Natural killer cell (primary cell): ENCODE measurements at regions of chr4 and their contacts with region 1.

Region 1: GRCh38 chr4:89294573-89295269 is 12.9 kb downstream of the GPRIN3 start:
- DNase-seq: peak in 1 of 2 donors; percentile 83
- ATAC-seq: peak; percentile 68 to 85 (median 82)
- H3K4me3 ChIP-seq: no peak overlapping the region
- H3K4me3 Mint-ChIP-seq: peak overlapping the region; percentile 87
- H3K27ac ChIP-seq: peak overlapping the region; percentile 88
- H3K27ac Mint-ChIP-seq: peak overlapping the region in 1 of 2 donors; percentile 96
- H3K4me1 ChIP-seq: peaks cover 47% of the 10 kb centered on the region
- H3K4me1 Mint-ChIP-seq: peaks cover 88 to 89% of the 10 kb centered on the region in 2 donors
- H3K27me3 ChIP-seq: no peaks in the 10 kb centered on the region
- H3K27me3 Mint-ChIP-seq: no peaks in the 10 kb centered on the region
- CTCF ChIP-seq: no peak

Region 2: GRCh38 chr4:88284439-88285234 is 1010.1 kb before region 1 on chr4 and contains the start of gene PPM1K:
- intact Hi-C with region 1: loop called (anchors 10 kb)
- DNase-seq: peak; percentile 99
- ATAC-seq: peak; percentile 80 to 95 (median 86)
- H3K4me3 ChIP-seq: peak within 1 kb of the TSS; percentile 85
- H3K4me3 Mint-ChIP-seq: peak within 1 kb of the TSS; percentile 99
- H3K27ac ChIP-seq: peak within 1 kb of the TSS; percentile 96
- H3K27ac Mint-ChIP-seq: peak within 1 kb of the TSS; percentile 92 to 100
- H3K4me1 ChIP-seq: peaks cover 26% of the 10 kb centered on the region
- H3K4me1 Mint-ChIP-seq: peaks cover 46 to 52% of the 10 kb centered on the region in 2 donors
- H3K27me3 ChIP-seq: no peaks in the 10 kb centered on the region
- H3K27me3 Mint-ChIP-seq: no peaks in the 10 kb centered on the region
- CTCF ChIP-seq: no peak
- total RNA-seq, gene PPM1K: 68.0 to 76.8 (median 74.3) TPM

Region 3: DNA sequence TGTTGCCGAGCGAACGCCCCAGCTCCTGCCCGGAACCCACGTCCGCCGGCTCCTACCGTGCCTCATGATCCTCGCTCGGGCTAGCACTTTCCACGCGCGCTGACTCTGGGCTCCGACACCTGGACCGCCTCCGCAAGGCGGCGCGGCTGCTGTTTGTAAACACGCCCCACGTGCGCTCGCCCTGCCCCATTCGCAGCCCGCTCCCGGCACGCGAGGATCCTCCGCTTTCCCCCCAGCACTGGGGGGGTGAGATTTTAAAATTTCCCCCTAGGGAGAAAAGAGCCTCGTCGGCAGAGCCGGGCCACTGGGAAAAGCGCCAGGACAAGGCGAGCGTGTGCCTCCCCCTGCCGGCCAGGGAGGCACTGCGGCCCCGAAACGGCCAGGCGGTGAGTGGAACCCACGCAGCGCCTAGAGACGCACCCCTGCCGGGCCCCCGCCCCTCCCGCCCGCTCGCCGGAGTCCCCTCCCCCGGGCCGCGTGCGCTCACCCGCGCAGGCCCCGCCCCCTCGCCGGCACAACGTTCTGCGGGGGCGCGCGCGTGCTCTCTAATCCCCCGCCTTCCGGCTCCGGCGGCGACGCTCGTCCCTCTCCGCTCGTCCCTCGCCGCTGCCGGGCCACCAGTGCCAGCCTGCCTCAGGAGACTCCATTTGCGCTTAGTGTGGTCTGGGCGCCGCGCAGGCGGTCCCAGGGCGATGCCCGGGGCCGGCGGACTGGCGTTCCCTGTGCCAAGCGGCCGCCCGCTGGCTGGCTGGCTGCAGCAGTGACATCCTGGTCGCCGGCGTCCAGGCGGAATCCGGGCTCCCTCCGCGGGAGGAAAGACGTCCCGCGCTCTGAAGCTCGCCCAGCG is 183.5 kb before region 1 on chr4 and contains the start of gene TIGD2:
- intact Hi-C with region 1: loop called (anchors 10 kb)
- DNase-seq: peak; percentile 86 to 95
- ATAC-seq: peak; percentile 92 to 98 (median 92)
- H3K4me3 ChIP-seq: peak within 1 kb of the TSS; percentile 62
- H3K4me3 Mint-ChIP-seq: peak within 1 kb of the TSS; percentile 96
- H3K27ac ChIP-seq: peak within 1 kb of the TSS; percentile 68
- H3K27ac Mint-ChIP-seq: peak within 1 kb of the TSS; percentile 89 to 90
- H3K4me1 ChIP-seq: peaks cover 14% of the 10 kb centered on the region
- H3K4me1 Mint-ChIP-seq: peaks cover 27 to 32% of the 10 kb centered on the region in 2 donors
- H3K27me3 ChIP-seq: no peaks in the 10 kb centered on the region
- H3K27me3 Mint-ChIP-seq: peaks cover 11 to 18% of the 10 kb centered on the region in 2 donors
- CTCF ChIP-seq: peak; percentile 94
- total RNA-seq, gene TIGD2: 3.2 to 7.6 (median 5.1) TPM

Region 4: DNA sequence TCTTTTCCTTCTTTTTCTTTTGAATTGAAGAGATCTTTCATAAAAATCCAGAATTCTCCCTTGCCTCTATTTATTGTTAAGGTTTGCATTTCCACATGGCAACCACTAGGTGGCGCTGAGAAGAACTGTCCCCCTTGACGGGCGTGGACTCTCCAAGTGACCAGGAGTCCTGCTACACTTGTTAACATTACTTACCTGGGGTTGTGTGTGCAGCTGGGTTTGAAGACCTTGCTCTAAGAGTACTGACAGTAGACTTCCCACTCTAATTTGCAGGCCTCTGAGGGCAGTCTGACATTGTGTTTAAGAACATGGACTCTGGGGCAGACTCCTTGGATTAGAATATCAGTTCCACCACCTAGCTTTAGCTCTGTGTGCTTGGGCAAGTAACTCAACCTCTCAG is 39.9 kb before region 1 on chr4:
- intact Hi-C with region 1: loop called (anchors 2 kb)
- DNase-seq: peak; percentile 48 to 83
- ATAC-seq: peak; percentile 79 to 86 (median 81)
- H3K4me3 ChIP-seq: no peak overlapping the region
- H3K4me3 Mint-ChIP-seq: peak overlapping the region; percentile 49
- H3K27ac ChIP-seq: peak overlapping the region; percentile 49
- H3K27ac Mint-ChIP-seq: peak overlapping the region; percentile 74 to 77
- H3K4me1 ChIP-seq: peaks cover 27% of the 10 kb centered on the region
- H3K4me1 Mint-ChIP-seq: peaks cover 53 to 67% of the 10 kb centered on the region in 2 donors
- H3K27me3 ChIP-seq: no peaks in the 10 kb centered on the region
- H3K27me3 Mint-ChIP-seq: no peaks in the 10 kb centered on the region
- CTCF ChIP-seq: peak; percentile 90

Region 5: DNA sequence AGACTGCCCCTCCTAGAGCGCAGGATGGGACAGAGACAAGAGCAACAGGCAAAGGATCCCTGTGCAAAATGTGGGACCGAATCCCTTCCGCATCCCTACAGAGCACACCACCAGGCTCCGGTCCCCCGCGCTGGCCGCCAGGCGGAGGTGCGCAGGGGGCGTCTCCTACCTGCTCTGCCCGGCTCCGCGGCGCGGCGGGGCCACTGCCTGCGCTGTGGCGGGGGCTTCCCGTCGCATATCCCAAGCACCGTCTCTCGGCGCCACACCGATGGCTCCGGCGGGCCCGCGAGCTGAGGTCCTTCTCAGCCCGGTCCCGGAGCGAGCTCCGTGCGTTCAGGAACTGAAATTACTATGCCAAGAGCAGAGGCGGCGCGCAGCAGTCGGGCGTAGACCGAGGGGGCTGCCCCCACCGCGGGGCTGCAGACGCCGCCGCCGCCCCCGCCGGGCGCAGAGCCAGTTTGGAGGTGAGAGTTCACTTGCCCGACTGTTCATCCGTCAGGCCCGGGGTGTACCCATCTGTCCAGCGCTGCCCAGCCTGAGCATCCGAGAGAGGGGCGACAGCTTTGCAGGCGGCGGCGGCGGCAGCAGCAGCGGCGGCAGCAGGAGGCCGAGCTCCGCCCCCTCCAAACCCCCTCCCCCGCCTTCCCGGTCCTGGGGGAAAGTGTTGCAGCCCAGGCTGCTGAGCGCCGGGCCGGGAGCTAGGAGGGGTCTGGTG is 12.9 kb after region 1 on chr4 and contains the start of gene GPRIN3:
- intact Hi-C with region 1: loop called (anchors 1 kb)
- DNase-seq: peak; percentile 69 to 81
- ATAC-seq: peak; percentile 64 to 78 (median 75)
- H3K4me3 ChIP-seq: peak within 1 kb of the TSS; percentile 75
- H3K4me3 Mint-ChIP-seq: peak within 1 kb of the TSS; percentile 91
- H3K27ac ChIP-seq: peak within 1 kb of the TSS; percentile 67
- H3K27ac Mint-ChIP-seq: peak within 1 kb of the TSS in 1 of 2 donors; percentile 96
- H3K4me1 ChIP-seq: peaks cover 22% of the 10 kb centered on the region
- H3K4me1 Mint-ChIP-seq: peaks cover 54 to 56% of the 10 kb centered on the region in 2 donors
- H3K27me3 ChIP-seq: no peaks in the 10 kb centered on the region
- H3K27me3 Mint-ChIP-seq: no peaks in the 10 kb centered on the region
- CTCF ChIP-seq: no peak
- total RNA-seq, gene GPRIN3: 48.3 to 50.7 (median 48.5) TPM